A673 (cell line): ENCODE measurements at regions of chr16 and their contacts with region 1.

Region 1: GRCh38 chr16:68093816-68094613 is 8.8 kb downstream of the NFATC3 start:
- DNase-seq: peak; percentile 42
- H3K4me3 ChIP-seq: no peak overlapping the region
- H3K27ac ChIP-seq: no peak overlapping the region
- H3K4me1 ChIP-seq: peaks cover 26% of the 10 kb centered on the region
- H3K27me3 ChIP-seq: no peaks in the 10 kb centered on the region
- CTCF ChIP-seq: peak; percentile 62

Region 2: GRCh38 chr16:67613808-67614207 is 480.2 kb before region 1 on chr16:
- CTCF ChIA-PET with region 1: no interaction called
- POLR2A ChIA-PET with region 1: no interaction called
- intact Hi-C with region 1: no loop called
- DNase-seq: peak; percentile 17
- H3K4me3 ChIP-seq: no peak overlapping the region
- H3K27ac ChIP-seq: no peak overlapping the region
- H3K4me1 ChIP-seq: no peaks in the 10 kb centered on the region
- H3K27me3 ChIP-seq: no peaks in the 10 kb centered on the region
- CTCF ChIP-seq: peak; percentile 46

Region 3: GRCh38 chr16:68074850-68075555 is 19.0 kb before region 1 on chr16:
- CTCF ChIA-PET with region 1: no interaction called
- POLR2A ChIA-PET with region 1: no interaction called
- intact Hi-C with region 1: no loop called
- DNase-seq: no peak
- H3K4me3 ChIP-seq: no peak overlapping the region
- H3K27ac ChIP-seq: no peak overlapping the region
- H3K4me1 ChIP-seq: no peaks in the 10 kb centered on the region
- H3K27me3 ChIP-seq: no peaks in the 10 kb centered on the region
- CTCF ChIP-seq: no peak

Region 4: DNA sequence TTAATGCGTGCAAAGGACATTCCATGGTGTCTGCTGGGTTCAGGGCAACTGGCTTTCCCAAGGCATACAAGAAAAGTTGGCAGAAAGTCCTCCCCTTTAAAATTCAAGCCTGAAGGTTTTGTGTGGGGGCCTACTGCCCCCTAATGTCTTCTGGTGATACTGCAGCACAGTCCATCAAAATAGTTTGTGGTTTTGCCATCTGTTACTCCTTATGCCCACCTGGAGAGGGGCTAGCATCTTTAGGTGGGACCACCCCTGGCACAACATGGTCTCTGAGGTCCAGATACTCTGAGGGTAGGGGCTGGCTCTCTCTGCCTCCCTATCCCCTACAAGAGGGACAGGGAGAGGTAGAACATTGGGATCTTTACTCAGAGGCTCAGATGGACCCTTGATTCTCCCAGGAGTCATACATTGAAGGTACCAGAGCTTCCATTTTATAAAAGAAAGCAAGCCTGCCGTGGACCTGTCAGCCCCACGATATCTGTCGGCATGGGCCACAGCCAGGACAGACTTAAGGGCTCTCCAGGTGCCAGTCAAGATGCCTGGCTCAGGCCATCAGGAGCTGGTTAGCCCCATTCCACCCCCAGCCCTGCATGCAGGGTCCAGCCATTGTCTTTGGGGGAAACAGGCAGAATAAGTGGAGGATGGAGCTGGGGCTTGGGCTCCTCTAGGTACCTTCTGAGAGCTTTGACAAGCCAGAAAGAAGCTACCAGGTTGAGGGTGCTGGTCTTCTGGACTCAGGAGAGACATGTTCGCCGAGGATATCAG is 135.6 kb after region 1 on chr16:
- CTCF ChIA-PET with region 1: interaction called, 3 read pairs
- POLR2A ChIA-PET with region 1: no interaction called
- intact Hi-C with region 1: loop called (anchors 5 kb)
- DNase-seq: peak; percentile 73
- H3K4me3 ChIP-seq: no peak overlapping the region
- H3K27ac ChIP-seq: no peak overlapping the region
- H3K4me1 ChIP-seq: no peaks in the 10 kb centered on the region
- H3K27me3 ChIP-seq: no peaks in the 10 kb centered on the region
- CTCF ChIP-seq: peak; percentile 90

Region 5: GRCh38 chr16:69535123-69536050 is 1441.4 kb after region 1 on chr16:
- CTCF ChIA-PET with region 1: no interaction called
- POLR2A ChIA-PET with region 1: no interaction called
- intact Hi-C with region 1: no loop called
- DNase-seq: no peak
- H3K4me3 ChIP-seq: no peak overlapping the region
- H3K27ac ChIP-seq: no peak overlapping the region
- H3K4me1 ChIP-seq: peaks cover 47% of the 10 kb centered on the region
- H3K27me3 ChIP-seq: no peaks in the 10 kb centered on the region
- CTCF ChIP-seq: no peak